Right ventricle myocardium inferior (tissue), 1 donor: ENCODE measurements at regions of chr16 and their contacts with region 1.

Region 1: GRCh38 chr16:66483689-66484481 is 56.8 kb downstream of the BEAN1 start:
- DNase-seq: peak; percentile 94
- ATAC-seq: peak; percentile 71

Region 2: GRCh38 chr16:66357153-66357928 is 126.5 kb before region 1 on chr16:
- intact Hi-C with region 1: loop called (anchors 2 kb)
- DNase-seq: no peak
- ATAC-seq: peak; percentile 34

Region 3: DNA sequence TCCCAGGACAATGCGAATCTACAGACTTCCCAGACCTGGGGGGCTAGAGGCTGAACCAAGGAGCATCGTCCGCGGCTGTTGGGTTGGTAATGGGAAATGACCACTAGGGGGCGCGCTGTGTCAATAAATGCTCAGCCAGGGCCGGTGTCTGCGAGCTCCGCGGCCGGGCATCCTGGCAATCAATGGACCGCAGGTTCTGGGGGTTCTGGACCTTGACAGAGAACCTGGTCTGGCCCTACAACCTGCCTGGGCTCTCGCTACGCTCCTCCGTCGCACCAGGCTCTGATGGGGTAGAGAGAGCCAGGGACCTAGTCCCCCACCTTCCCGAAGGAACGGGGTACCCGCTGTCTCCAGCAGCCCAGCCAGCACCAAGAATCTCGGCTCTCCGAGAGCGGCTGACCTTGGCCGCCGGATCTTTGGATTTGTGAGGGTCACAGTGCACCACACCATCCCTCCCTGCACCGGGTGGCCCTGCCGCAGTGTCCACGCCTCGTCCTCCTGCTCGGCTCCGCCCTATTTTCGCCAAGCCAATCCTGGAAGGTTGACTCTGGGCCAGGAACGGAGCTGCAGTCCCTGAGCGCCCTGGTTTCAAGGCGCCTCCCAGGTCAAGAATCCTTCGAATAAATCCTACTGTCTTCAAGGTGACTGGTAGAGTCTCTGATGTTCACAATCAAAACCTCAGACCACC is 77.2 kb before region 1 on chr16:
- intact Hi-C with region 1: loop called (anchors 1 kb)
- DNase-seq: peak; percentile 93
- ATAC-seq: peak; percentile 82

Region 4: DNA sequence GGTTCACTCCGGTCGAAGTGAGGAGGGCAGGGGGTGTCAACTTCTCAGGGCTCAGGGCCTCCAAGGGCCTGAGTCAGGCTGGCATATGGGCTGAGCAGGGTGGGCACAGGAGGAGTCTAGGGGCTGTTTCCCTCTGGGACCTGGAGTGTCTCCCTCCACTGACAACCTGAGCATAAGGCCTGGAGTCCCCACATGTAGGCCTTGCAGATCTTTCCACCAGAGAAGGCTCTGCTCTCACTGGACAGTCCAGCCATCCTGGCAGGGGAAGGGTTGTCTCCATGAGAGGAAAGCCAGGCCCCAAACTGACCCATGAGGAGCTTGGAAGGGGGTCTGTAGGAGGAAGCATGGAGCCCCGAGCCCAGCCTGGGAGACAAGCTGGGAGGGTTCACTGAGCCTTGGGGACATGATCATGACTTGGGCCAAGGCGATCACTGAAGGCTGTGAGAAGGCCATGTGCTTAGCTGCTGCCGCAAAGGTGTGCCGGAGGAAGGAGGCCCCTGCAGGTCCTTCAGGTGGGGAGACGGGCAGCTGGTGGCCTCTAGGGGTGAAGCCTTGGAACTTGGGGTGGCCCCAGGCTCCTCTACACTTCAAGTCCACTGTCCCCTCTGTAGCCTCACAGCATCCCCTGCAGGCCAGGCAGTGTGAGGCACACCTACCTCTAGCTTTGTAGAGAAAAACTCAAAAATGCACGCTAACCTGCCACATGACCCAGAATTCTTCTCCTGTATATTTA is 105.3 kb after region 1 on chr16:
- intact Hi-C with region 1: loop called (anchors 5 kb)
- DNase-seq: peak; percentile 79
- ATAC-seq: peak; percentile 78

Region 5: GRCh38 chr16:66608241-66609138 is 124.6 kb after region 1 on chr16:
- intact Hi-C with region 1: loop called (anchors 5 kb)
- DNase-seq: peak; percentile 92
- ATAC-seq: peak; percentile 52